Sigmoid colon (tissue), 7 donors: ENCODE measurements at regions of chr1 and their contacts with region 1.

Region 1: GRCh38 chr1:83998498-83999315 is at the start of gene TTLL7:
- DNase-seq: peak; percentile 86
- H3K4me3 ChIP-seq: peak within 1 kb of the TSS; percentile 83 to 94 (median 90)
- H3K27ac ChIP-seq: peak within 1 kb of the TSS; percentile 83 to 90 (median 88)
- H3K4me1 ChIP-seq: peaks cover 0 to 18% (median 8%) of the 10 kb centered on the region in 4 donors
- H3K27me3 ChIP-seq: no peaks in the 10 kb centered on the region
- CTCF ChIP-seq: no peak
- EP300 ChIP-seq: no peak
- POLR2A ChIP-seq: peak in 1 of 2 donors; percentile 44
- total RNA-seq, gene TTLL7: 15.5 to 34.9 (median 17.2) TPM

Region 2: GRCh38 chr1:84077476-84078107 is 78.9 kb after region 1 on chr1:
- intact Hi-C with region 1: loop called (anchors 2 kb)
- DNase-seq: peak; percentile 78
- H3K4me3 ChIP-seq: peak overlapping the region; percentile 76 to 97 (median 95)
- H3K27ac ChIP-seq: peak overlapping the region; percentile 91 to 94 (median 93)
- H3K4me1 ChIP-seq: peaks cover 0 to 22% (median 17%) of the 10 kb centered on the region in 4 donors
- H3K27me3 ChIP-seq: no peaks in the 10 kb centered on the region
- CTCF ChIP-seq: no peak
- EP300 ChIP-seq: no peak
- POLR2A ChIP-seq: peak; percentile 9 to 32

Region 3: GRCh38 chr1:84122780-84123382 is 124.2 kb after region 1 on chr1:
- intact Hi-C with region 1: loop called (anchors 5 kb)
- DNase-seq: peak; percentile 53
- H3K4me3 ChIP-seq: no peak overlapping the region
- H3K27ac ChIP-seq: no peak overlapping the region
- H3K4me1 ChIP-seq: peaks cover 0 to 9% (median 0%) of the 10 kb centered on the region in 4 donors
- H3K27me3 ChIP-seq: no peaks in the 10 kb centered on the region
- CTCF ChIP-seq: peak; percentile 19 to 59 (median 53)
- EP300 ChIP-seq: no peak
- POLR2A ChIP-seq: no peak

Region 4: DNA sequence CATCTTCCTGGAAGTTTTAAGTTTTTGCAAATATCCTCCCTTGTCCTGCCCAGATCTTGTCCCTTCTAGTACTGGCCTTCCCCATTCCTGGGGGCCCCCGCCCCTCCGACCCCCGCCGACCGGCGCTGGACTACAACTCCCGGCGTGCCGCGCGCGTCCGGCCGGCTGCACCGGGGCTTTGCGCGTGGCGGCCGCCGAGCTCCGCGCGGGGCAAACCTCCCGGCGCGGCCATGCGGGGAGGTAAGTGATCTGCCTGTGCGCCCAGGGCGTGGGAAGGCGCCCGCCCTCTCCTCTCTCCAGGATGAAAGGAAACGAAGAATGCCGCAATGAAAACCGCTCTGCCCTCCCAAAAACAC is 299.6 kb after region 1 on chr1:
- intact Hi-C with region 1: loop called (anchors 5 kb)
- DNase-seq: peak; percentile 70
- H3K4me3 ChIP-seq: peak overlapping the region; percentile 62 to 78 (median 74)
- H3K27ac ChIP-seq: peak overlapping the region; percentile 81 to 86 (median 82)
- H3K4me1 ChIP-seq: peaks cover 0 to 39% (median 26%) of the 10 kb centered on the region in 4 donors
- H3K27me3 ChIP-seq: no peaks in the 10 kb centered on the region
- CTCF ChIP-seq: no peak
- EP300 ChIP-seq: no peak
- POLR2A ChIP-seq: no peak

Region 5: GRCh38 chr1:84319662-84320061 is 321.0 kb after region 1 on chr1:
- intact Hi-C with region 1: no loop called
- DNase-seq: no peak
- H3K4me3 ChIP-seq: no peak overlapping the region
- H3K27ac ChIP-seq: no peak overlapping the region
- H3K4me1 ChIP-seq: no peaks in the 10 kb centered on the region
- H3K27me3 ChIP-seq: no peaks in the 10 kb centered on the region
- CTCF ChIP-seq: no peak
- EP300 ChIP-seq: no peak
- POLR2A ChIP-seq: no peak